Right ventricle myocardium superior (tissue), 1 donor: ENCODE measurements at regions of chr3 and their contacts with region 1.

Region 1: DNA sequence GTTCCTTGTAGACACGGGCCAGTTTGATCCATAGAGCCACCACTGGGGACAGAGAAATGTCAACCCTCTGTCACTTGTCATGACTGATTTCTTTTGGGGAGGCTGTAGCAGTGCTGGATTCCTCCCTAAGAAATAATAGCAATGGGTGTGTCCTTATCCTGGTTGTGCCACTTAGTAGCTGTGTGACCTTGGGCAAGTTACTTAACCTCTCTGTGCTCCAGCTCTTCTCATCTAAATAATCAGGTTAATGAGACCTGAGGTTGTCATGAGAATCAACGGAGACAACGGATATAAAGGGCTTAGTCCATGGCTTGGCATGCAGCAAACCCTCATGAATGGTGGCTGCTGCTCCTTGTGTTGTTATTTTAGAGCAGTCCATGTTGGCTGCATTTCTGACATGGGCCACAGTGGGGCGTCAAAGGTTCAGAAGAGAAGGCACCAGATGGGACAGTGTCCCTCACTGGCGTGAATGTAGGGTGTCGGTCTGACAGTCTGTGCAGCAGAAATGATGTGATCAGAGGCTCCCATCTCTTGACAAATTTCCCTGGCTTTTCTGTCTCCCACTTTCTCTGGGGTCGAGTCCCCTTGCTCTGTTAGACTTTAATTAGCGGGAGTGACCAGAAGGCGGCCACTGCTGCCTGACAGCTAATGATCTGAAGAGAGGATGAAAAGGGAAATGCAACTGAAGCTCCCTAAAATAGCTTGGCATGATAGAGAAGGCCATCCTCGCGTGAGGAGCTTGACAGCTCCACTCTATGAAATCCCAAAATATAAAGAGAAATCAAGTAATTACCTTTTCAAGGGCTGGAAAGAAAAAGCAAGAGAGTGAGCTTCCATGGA is 209.4 kb downstream of the CADPS start:
- DNase-seq: peak; percentile 74
- ATAC-seq: peak; percentile 92

Region 2: GRCh38 chr3:62134061-62134496 is 531.7 kb before region 1 on chr3:
- intact Hi-C with region 1: no loop called
- DNase-seq: peak; percentile 78
- ATAC-seq: peak; percentile 81

Region 3: DNA sequence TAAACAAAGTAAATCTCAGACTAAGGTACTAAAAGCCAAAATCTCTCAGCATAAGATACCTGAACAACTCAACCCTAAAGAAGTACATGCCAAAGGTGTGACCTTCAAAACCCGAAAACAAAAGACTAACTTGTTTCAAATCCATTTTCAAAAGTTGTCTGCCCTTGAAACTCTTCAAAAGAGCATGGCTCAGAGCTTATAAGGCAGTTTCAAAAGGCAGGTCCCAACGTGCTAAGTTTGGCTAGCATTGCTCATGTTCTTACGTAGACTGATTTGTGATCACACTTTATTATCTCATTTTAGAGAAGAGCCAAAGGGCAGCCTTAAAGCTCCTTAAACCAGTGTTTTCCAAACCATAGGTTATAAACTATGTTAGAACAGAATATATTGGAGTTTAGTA is 404.7 kb before region 1 on chr3:
- intact Hi-C with region 1: no loop called
- DNase-seq: no peak
- ATAC-seq: peak; percentile 69

Region 4: GRCh38 chr3:62922086-62922725 is 256.4 kb after region 1 on chr3:
- intact Hi-C with region 1: loop called (anchors 10 kb)
- DNase-seq: no peak
- ATAC-seq: no peak

Region 5: GRCh38 chr3:63193629-63194028 is 527.8 kb after region 1 on chr3:
- intact Hi-C with region 1: loop called (anchors 5 kb)
- DNase-seq: no peak
- ATAC-seq: no peak

Region 6: DNA sequence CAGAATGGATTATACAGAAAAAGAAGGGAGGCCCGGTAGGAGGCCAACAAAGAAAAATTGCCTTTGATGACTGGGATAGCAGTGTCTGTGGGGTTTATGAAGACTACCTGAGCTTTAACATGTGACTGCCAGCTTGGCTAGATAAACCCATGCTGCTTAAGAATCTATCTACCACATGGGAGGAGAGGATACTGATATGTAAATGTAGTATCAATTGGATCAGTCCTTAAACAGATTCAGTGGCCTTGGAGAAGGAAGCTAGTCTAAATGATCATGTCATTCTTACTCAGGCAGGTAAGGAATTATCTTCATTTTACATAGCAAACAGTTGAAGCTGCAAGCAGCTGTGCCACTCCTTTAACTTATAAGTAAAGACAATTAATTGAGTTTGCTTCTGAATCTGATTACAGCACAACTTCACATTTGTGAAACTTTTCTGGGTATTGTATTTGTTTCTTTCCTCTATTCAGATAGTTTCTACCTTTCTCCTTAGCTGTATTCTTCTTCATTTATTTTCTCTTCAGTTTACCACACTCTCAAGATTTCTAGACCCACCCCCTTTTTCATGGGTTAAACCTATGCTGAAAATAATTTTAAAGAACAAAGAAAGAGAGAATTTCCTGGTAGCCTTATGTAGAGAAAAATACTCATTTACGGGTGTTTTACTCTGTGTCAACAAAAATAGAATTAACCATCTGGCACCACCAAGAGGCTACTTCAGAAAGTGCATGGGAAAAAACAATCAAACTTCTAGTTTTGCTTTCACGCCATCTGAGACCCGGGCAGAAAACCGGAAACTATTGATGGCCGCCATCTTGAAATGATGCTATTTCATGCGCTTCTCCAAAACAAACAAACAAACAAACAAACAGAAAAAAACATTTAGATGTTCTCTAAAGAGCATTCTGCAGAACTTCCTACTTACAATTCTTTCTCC is 562.5 kb after region 1 on chr3:
- intact Hi-C with region 1: loop called (anchors 10 kb)
- DNase-seq: no peak
- ATAC-seq: peak; percentile 52